GM13976 (cell line): ENCODE measurements at regions of chr11 and their contacts with region 1.

Region 1: DNA sequence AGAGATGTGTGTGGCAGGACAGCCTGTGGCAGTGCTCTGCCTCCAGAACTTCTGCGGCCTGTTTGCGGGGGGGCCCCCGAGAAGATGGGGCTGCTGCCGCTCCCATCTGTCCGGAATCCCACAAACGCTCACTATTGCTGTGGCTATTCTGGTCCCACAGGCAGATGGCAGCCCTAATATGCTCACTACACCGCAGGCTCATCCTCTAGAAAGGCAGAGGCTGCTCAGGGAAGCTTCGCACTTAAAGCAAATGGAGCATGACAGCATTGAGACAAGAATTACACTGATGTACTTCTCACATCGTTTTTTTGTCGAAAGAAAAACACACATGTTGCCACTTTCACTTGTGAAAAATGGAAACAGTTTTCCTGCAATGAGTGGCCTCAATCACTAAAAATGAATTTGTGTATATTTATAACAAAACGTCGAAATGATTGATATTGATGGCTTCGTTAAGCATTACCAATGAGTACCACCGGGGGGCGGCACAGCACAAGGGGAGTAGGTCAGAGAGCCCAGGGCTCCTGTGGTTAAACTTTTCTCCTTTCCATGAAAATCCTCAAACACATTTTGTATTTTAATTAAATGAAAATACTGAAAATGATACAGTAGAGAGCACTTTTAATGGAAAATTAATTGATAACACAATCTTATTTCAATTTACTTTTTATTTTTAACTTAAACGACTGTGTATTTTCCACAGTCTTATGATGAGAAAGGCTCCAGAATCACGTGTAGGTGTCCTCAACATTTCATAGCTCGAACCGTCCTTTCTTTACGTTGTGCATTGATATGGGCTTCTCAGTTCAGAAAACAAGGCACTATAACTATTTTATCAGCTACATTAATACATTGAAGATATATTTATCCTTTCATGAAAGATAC is 69.1 kb downstream of the CTTN start:
- DNase-seq: peak; percentile 71
- CTCF ChIP-seq: peak; percentile 78

Region 2: GRCh38 chr11:70270104-70270876 is 197.2 kb before region 1 on chr11 and contains the start of gene PPFIA1:
- in situ Hi-C with region 1: no loop called
- DNase-seq: peak; percentile 99
- CTCF ChIP-seq: peak; percentile 19

Region 3: GRCh38 chr11:70595452-70595851 is 128.0 kb after region 1 on chr11:
- in situ Hi-C with region 1: no loop called
- DNase-seq: no peak
- CTCF ChIP-seq: no peak

Region 4: GRCh38 chr11:70755410-70756161 is 288.1 kb after region 1 on chr11:
- in situ Hi-C with region 1: loop called (anchors 10 kb)
- DNase-seq: peak; percentile 95
- CTCF ChIP-seq: peak; percentile 94

Region 5: DNA sequence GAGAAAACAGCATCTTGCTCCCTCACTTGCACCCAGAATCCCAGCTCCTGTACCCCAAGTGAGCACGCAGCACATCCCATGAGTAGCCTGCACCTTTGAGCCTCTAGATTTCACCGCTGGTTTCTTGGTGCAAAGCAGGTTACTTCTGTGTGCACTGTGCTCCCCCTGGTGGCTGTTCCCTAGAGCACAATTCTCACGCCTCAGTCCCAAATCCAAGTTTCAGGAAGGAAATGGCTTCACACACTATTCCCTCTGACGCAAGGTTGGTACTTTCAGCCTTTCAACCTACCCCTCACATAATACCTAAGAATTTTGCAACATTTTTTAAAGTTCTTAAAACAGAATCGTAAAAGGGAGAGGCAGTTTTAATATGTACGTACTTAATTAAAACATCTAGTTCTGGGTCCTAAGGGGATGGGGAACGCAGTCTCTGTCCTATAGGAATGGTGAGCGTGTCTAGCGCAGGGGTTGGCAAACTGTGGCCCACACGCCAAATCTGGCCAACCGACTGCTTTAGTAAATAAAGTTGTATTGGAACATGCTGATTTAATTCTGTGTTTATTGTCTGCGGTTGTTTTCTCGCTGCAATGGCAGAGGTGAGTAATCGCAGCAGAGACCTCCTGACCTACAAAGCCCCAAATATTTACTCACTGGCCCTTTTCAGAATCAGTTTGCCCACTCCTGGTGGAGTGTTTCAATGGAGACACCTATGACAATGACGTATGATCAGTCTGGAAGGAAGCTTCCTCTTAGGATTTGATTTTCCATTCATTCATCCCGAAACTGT is 953.2 kb after region 1 on chr11:
- in situ Hi-C with region 1: loop called (anchors 25 kb)
- DNase-seq: no peak
- CTCF ChIP-seq: peak; percentile 82